Activated CD4-positive, alpha-beta memory T cell treated with anti-CD3 and anti-CD28 coated beads for 36 hours (primary cell): ENCODE measurements at regions of chr15 and their contacts with region 1.

Region 1: DNA sequence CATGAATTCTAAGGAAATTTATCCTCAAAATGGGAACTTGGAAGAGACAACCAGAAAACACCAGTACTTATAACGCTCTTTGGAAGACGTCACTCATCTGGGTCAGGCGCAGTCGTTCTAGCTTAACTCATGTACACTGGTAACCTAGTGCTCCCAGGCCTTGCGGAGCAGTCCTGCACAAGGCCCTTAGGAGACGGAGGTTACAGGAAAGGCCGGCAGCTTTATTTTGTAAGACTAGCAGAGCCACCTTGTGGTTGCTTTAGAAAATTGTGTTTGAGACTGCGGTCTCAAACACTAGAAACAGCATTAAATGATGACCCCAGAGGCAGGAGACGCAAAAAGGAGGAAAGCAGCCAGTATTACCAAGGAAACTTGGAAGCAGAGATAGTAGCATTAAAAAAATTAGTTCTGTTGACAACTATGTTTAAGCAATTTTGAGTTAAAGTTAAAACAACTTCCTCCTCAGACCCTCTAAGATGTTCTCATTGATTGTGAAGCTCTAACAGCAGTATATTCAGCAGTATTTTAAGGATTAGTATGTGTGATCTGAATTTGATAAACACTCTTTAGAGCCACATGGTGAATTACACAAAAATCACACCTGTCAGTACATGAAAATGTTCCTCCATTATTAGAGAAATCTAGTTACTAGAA is 141.9 kb upstream of the C2CD4B start:
- DNase-seq: peak; percentile 15
- H3K4me3 Mint-ChIP-seq: no peak overlapping the region
- H3K27ac Mint-ChIP-seq: no peak overlapping the region
- H3K4me1 Mint-ChIP-seq: peaks cover 3% of the 10 kb centered on the region
- H3K27me3 Mint-ChIP-seq: peaks cover 19% of the 10 kb centered on the region

Region 2: DNA sequence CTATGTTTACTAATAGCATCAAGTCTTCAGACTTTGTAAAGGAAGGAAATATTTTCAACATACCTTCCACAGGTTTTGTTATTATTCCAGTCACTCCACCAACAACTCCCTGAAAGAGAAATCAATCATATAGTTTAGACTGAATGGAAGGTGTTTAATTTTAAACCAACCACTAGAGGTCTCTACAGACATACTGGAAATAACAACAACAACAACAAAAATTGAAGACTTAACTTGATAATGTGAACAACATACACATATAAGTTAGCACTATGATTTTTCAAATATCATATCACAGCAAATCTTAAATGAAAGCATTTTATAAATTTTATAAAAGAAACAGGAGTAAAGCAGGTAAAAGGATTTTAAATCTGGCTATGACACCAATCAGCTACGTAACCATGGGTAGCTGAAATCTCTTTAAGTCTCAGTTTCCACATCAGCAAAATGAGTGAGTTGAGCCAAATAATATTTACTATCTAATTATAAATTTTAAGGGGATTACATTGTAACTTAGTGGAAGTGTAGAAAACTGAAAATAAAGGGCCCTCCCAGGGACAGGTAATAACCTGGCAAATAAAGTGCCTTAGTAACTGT is 435.0 kb before region 1 on chr15:
- CTCF ChIA-PET with region 1: interaction called, 6 read pairs
- POLR2A ChIA-PET with region 1: no interaction called
- intact Hi-C with region 1: loop called (anchors 5 kb)
- DNase-seq: no peak
- H3K4me3 Mint-ChIP-seq: no peak overlapping the region
- H3K27ac Mint-ChIP-seq: no peak overlapping the region
- H3K4me1 Mint-ChIP-seq: no peaks in the 10 kb centered on the region
- H3K27me3 Mint-ChIP-seq: no peaks in the 10 kb centered on the region

Region 3: GRCh38 chr15:62209322-62209721 is 97.7 kb before region 1 on chr15:
- CTCF ChIA-PET with region 1: no interaction called
- POLR2A ChIA-PET with region 1: no interaction called
- intact Hi-C with region 1: no loop called
- DNase-seq: no peak
- H3K4me3 Mint-ChIP-seq: no peak overlapping the region
- H3K27ac Mint-ChIP-seq: no peak overlapping the region
- H3K4me1 Mint-ChIP-seq: peaks cover 10% of the 10 kb centered on the region
- H3K27me3 Mint-ChIP-seq: peaks cover 18% of the 10 kb centered on the region

Region 4: GRCh38 chr15:62254137-62254934 is 52.6 kb before region 1 on chr15:
- CTCF ChIA-PET with region 1: interaction called, 11 read pairs
- POLR2A ChIA-PET with region 1: no interaction called
- intact Hi-C with region 1: no loop called
- DNase-seq: peak; percentile 79
- H3K4me3 Mint-ChIP-seq: no peak overlapping the region
- H3K27ac Mint-ChIP-seq: no peak overlapping the region
- H3K4me1 Mint-ChIP-seq: no peaks in the 10 kb centered on the region
- H3K27me3 Mint-ChIP-seq: peaks cover 7% of the 10 kb centered on the region

Region 5: DNA sequence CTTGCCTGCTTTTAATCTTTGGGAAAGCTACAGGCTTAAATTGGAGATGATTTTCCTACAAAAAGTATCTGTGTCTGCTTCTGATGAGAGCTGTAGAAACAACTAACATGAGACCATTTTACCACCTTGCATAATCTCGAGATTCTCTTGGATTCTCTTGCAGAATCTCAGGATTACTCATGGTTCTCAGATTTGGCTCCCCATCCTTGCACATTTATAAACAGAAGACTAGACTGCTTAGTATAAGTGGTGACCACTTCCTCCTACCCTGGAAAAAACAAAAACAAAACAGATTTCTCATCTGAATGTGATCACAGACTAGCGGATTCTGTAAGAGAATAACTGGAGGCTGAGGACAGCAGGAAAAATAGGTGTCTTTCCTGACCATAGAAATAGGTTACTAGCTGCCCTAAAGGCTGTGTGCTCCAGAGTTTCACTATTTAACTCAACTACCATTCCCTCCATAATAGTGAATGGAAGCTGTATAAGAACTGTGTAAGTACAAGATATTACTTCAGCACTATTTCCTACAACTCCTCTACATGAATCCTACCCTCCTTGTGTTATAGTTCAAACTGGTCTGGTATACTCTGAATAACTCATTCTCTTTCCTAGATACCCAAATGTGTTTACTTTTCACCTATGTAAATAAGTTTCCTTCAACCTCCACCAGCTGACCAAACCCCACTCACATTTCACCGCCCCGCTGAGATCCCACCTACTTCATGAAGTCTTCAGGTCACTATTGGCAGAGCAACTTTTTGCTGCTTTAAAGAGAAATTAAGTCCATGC is 19.7 kb before region 1 on chr15:
- CTCF ChIA-PET with region 1: no interaction called
- POLR2A ChIA-PET with region 1: no interaction called
- intact Hi-C with region 1: no loop called
- DNase-seq: no peak
- H3K4me3 Mint-ChIP-seq: no peak overlapping the region
- H3K27ac Mint-ChIP-seq: no peak overlapping the region
- H3K4me1 Mint-ChIP-seq: no peaks in the 10 kb centered on the region
- H3K27me3 Mint-ChIP-seq: peaks cover 32% of the 10 kb centered on the region

Region 6: DNA sequence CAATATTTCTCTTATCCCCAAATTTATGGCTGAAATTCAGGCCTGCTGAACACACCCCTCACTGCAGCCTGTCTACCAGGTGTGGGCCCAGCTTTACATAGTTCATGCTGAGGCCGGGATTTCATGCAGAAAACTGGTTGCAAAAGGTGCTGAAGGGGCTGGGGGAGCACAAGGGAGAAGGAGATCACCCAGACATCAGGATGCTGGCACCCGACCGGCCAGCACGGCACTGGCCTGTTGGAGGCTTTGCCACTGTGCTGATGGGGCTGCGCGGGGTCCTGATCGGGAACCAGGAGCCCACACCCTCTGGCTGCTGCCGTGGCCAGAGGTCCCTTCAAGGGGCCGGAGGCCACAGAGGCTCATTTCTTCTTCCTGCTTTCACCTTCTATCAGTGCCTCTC is 36.0 kb after region 1 on chr15:
- CTCF ChIA-PET with region 1: no interaction called
- POLR2A ChIA-PET with region 1: no interaction called
- intact Hi-C with region 1: no loop called
- DNase-seq: no peak
- H3K4me3 Mint-ChIP-seq: no peak overlapping the region
- H3K27ac Mint-ChIP-seq: no peak overlapping the region
- H3K4me1 Mint-ChIP-seq: peaks cover 7% of the 10 kb centered on the region
- H3K27me3 Mint-ChIP-seq: no peaks in the 10 kb centered on the region